Activated B cell treated with CpG ODN at 0.5 μM for 24 hours (primary cell): ENCODE measurements at regions of chr1 and their contacts with region 1.

Region 1: DNA sequence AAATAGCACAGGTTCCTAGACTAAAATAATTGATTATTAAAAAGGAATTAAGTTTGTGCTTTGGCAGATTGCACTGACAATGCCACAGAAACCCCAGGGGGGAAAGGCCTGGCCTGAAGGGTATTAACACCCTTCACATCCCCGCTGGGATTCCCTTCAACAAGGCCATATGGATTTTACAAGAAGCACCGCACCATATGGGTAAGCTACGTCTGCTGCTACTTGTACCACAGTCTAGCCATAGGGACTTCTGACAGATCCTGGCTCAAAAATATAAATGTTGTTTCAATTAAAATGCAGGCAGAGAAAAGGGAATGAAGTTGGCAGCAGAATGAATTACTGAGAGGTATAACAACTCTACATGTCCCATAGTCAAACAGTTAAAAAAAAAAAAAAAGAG is 101.0 kb downstream of the DENND1B start:
- DNase-seq: no peak
- ATAC-seq: no peak
- H3K4me3 Mint-ChIP-seq: no peak overlapping the region
- H3K27ac Mint-ChIP-seq: no peak overlapping the region
- H3K4me1 Mint-ChIP-seq: peaks cover 7% of the 10 kb centered on the region
- H3K27me3 Mint-ChIP-seq: no peaks in the 10 kb centered on the region
- CTCF ChIP-seq: no peak

Region 2: DNA sequence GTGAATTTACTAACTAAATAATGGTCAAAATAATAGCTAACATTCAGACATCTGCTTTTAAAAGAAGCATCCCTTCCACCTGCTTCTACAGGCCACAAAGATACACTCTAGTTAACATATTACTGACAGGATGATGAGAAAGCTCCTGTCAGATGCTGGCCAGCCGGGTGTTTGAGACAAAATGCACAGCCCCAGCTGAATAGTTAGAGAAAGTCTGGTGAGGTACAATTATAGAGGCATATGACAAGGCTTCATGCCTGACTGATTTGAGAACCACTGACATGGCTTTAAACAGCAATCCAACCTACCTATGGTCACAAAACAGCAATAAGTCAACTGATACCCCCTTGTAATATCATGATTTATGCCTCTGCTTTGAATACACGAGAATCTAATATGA is 36.0 kb before region 1 on chr1:
- CTCF ChIA-PET with region 1: no interaction called
- POLR2A ChIA-PET with region 1: no interaction called
- intact Hi-C with region 1: no loop called
- DNase-seq: no peak
- ATAC-seq: no peak
- H3K4me3 Mint-ChIP-seq: no peak overlapping the region
- H3K27ac Mint-ChIP-seq: no peak overlapping the region
- H3K4me1 Mint-ChIP-seq: peaks cover under 1% of the 10 kb centered on the region
- H3K27me3 Mint-ChIP-seq: no peaks in the 10 kb centered on the region
- CTCF ChIP-seq: no peak

Region 3: GRCh38 chr1:197659171-197659570 is 15.1 kb before region 1 on chr1:
- CTCF ChIA-PET with region 1: no interaction called
- POLR2A ChIA-PET with region 1: no interaction called
- intact Hi-C with region 1: loop called (anchors 1 kb)
- DNase-seq: no peak
- ATAC-seq: no peak
- H3K4me3 Mint-ChIP-seq: peak overlapping the region; percentile 50
- H3K27ac Mint-ChIP-seq: peak overlapping the region; percentile 25
- H3K4me1 Mint-ChIP-seq: peaks cover 8% of the 10 kb centered on the region
- H3K27me3 Mint-ChIP-seq: no peaks in the 10 kb centered on the region
- CTCF ChIP-seq: no peak

Region 4: GRCh38 chr1:197868751-197869489 is 194.6 kb after region 1 on chr1:
- CTCF ChIA-PET with region 1: no interaction called
- POLR2A ChIA-PET with region 1: no interaction called
- intact Hi-C with region 1: no loop called
- DNase-seq: no peak
- ATAC-seq: peak; percentile 82
- H3K4me3 Mint-ChIP-seq: no peak overlapping the region
- H3K27ac Mint-ChIP-seq: no peak overlapping the region
- H3K4me1 Mint-ChIP-seq: no peaks in the 10 kb centered on the region
- H3K27me3 Mint-ChIP-seq: no peaks in the 10 kb centered on the region
- CTCF ChIP-seq: no peak